Ascending aorta (tissue), 2 donors: ENCODE measurements at regions of chr22 and their contacts with region 1.

Region 1: GRCh38 chr22:24156913-24157821 is 24.1 kb upstream of the SUSD2 start:
- DNase-seq: peak; percentile 39 to 91
- H3K4me3 ChIP-seq: peak overlapping the region; percentile 74 to 92
- H3K27ac ChIP-seq: peak overlapping the region; percentile 80 to 89
- H3K4me1 ChIP-seq: peaks cover 18 to 45% of the 10 kb centered on the region in 2 donors
- H3K27me3 ChIP-seq: no peaks in the 10 kb centered on the region
- CTCF ChIP-seq: peak; percentile 79 to 84 (median 82)

Region 2: GRCh38 chr22:23997092-23997491 is 160.1 kb before region 1 on chr22:
- intact Hi-C with region 1: no loop called
- DNase-seq: no peak
- H3K4me3 ChIP-seq: no peak overlapping the region
- H3K27ac ChIP-seq: no peak overlapping the region
- H3K4me1 ChIP-seq: no peaks in the 10 kb centered on the region
- H3K27me3 ChIP-seq: no peaks in the 10 kb centered on the region
- CTCF ChIP-seq: no peak

Region 3: DNA sequence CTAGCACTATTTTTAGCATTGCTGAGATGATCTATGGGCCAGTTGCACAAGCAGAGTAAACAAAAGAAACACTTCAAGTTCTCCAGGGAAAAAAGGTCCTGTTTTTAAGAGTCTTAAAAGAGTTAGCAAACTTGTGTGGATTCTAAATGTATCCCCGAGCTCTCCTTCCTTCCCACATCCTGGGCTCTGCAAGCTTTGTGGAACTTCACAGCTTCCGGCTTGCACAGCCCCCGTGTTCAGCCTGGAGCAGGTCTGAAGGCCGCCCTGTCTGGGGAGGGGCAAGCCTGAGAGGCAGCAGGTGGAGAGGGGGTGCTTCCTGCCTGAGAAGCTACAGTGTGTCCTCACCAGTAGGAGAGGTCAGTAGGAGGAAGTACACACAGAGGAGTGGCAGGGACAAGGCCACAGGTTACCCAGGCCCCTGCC is 11.0 kb before region 1 on chr22:
- intact Hi-C with region 1: loop called (anchors 1 kb)
- DNase-seq: no peak
- H3K4me3 ChIP-seq: peak overlapping the region; percentile 10 to 18
- H3K27ac ChIP-seq: peak overlapping the region; percentile 86 to 92
- H3K4me1 ChIP-seq: peaks cover 26 to 58% of the 10 kb centered on the region in 2 donors
- H3K27me3 ChIP-seq: no peaks in the 10 kb centered on the region
- CTCF ChIP-seq: no peak

Region 4: GRCh38 chr22:24208012-24208749 is 51.0 kb after region 1 on chr22:
- intact Hi-C with region 1: loop called (anchors 5 kb)
- DNase-seq: peak in 1 of 2 donors; percentile 89
- H3K4me3 ChIP-seq: no peak overlapping the region
- H3K27ac ChIP-seq: peak overlapping the region; percentile 74 to 87
- H3K4me1 ChIP-seq: peaks cover 10 to 25% of the 10 kb centered on the region in 2 donors
- H3K27me3 ChIP-seq: no peaks in the 10 kb centered on the region
- CTCF ChIP-seq: no peak